MCF 10A (cell line): ENCODE measurements at regions of chr1 and their contacts with region 1.

Region 1: DNA sequence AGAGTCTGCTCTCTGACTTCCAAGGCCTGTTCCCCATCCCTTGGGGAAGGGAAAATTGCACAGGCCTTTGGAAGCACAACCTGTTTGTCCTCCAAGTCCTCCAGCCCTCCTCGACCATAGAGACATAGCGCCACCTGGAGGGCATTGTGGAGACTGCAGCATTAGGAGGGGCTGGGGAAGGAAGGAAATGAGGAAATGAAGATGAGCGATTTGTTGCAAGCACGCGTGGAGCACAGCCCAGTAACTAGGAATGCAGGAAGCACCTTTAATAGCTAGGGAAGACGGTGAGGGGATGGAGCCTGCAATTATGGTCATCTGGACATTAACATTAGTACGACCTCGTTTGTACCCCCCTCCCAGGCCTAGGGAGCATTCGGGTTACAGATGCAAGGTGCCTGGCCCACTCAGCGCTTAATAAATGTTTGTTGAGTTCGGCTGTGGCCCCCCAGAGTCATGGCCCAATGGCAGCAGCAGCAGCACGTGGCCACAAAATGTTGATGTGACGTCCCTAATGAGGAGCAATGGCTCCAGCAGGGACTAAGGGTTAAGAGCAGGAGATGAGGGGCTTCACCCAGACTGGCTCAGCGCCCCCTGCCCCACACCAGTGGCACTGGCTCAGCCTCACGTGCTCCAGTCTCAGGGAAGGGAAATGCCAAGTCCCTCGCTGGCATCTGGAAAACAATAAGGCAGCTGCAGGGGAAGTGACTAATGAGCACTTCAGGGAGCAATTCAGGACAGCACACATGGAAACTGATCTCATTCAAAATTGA is 8.0 kb upstream of the CAMK2N1 start:
- DNase-seq: peak; percentile 91
- H3K4me3 Mint-ChIP-seq: no peak overlapping the region
- H3K27ac Mint-ChIP-seq: no peak overlapping the region
- H3K4me1 Mint-ChIP-seq: peaks cover 29% of the 10 kb centered on the region
- H3K27me3 Mint-ChIP-seq: no peaks in the 10 kb centered on the region
- CTCF ChIP-seq: peak; percentile 94

Region 2: DNA sequence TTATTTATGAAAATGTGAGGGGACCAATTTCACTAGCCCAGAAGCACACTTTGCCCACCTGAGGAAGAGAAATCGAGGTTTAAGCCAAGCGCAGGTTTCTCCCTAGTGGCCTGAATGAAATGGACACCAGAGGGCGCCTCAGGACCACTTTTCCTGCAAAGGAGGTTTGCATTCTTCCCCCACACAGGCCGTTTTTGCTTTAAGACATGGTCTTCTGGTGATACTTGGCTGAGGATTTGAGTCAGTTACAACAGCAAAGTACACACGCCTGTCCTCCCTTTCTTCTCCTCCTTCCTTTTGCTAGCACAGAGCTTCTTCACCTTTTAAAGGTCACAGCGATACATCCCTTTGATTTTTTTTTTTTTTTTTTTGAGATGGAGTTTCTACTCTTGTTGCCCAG is 576.0 kb before region 1 on chr1:
- CTCF ChIA-PET with region 1: interaction called, 34 read pairs
- POLR2A ChIA-PET with region 1: interaction called, 4 read pairs
- intact Hi-C with region 1: loop called (anchors 1 kb)
- DNase-seq: peak; percentile 84
- H3K4me3 Mint-ChIP-seq: no peak overlapping the region
- H3K27ac Mint-ChIP-seq: no peak overlapping the region
- H3K4me1 Mint-ChIP-seq: peaks cover 11% of the 10 kb centered on the region
- H3K27me3 Mint-ChIP-seq: no peaks in the 10 kb centered on the region
- CTCF ChIP-seq: peak; percentile 90

Region 3: DNA sequence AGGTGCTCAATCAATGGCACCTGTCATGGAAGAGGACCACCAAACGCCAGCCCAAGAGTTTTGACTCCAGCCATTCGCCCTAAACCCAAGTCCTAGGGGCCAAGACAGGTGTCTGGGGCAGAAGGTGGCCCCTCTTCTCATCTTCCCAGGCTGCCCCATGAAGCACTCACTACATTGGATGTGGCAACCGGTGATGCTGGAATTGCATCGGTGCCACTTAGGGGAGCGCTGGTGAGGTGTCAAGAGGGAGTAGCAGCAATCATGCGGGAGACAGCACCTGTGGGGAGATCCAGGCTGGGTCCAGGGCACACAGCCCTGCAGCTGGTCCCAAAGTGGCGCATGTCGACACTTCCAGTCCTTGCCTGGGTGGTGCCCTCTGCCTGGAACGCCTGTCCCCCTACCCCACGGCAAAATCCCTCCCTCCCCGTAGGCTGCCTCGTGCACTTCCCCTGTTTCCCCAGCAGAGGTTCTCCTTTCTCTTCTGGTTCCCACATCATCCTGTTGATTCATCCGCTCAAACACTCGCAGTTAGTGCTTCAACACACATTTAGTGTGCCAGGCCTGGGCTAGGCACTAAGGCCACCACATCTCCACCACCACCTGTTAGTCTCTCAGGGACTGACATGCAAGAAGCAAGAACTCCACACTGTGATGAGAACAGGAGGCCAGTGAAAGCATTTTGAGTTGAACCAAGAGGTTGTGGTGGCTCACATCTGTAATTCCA is 393.2 kb before region 1 on chr1:
- CTCF ChIA-PET with region 1: interaction called, 7 read pairs
- POLR2A ChIA-PET with region 1: no interaction called
- intact Hi-C with region 1: loop called (anchors 2 kb)
- DNase-seq: peak; percentile 61
- H3K4me3 Mint-ChIP-seq: no peak overlapping the region
- H3K27ac Mint-ChIP-seq: no peak overlapping the region
- H3K4me1 Mint-ChIP-seq: peaks cover 12% of the 10 kb centered on the region
- H3K27me3 Mint-ChIP-seq: no peaks in the 10 kb centered on the region
- CTCF ChIP-seq: peak; percentile 92

Region 4: GRCh38 chr1:20178634-20179370 is 315.2 kb before region 1 on chr1:
- CTCF ChIA-PET with region 1: interaction called, 11 read pairs
- POLR2A ChIA-PET with region 1: no interaction called
- intact Hi-C with region 1: no loop called
- DNase-seq: no peak
- H3K4me3 Mint-ChIP-seq: no peak overlapping the region
- H3K27ac Mint-ChIP-seq: no peak overlapping the region
- H3K4me1 Mint-ChIP-seq: peaks cover 6% of the 10 kb centered on the region
- H3K27me3 Mint-ChIP-seq: no peaks in the 10 kb centered on the region
- CTCF ChIP-seq: no peak

Region 5: DNA sequence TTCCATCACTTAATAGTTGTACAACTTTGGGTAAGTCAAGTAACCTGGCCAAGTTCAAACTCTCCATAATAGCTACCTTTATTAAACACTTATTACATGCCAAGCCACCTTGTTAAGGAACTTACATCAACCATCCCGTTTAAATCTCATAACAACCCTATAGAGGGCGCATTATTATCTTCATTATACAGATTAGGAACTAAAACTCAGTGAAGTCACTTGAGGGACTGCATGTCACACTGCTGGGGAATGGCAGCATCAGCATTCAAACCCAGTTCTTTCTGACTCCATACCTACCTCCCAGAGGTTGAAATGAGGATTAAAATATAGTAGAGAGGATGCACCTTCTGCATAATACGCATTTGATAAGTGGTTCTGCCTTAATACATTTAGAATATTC is 260.6 kb before region 1 on chr1:
- CTCF ChIA-PET with region 1: interaction called, 3 read pairs
- POLR2A ChIA-PET with region 1: no interaction called
- intact Hi-C with region 1: loop called (anchors 5 kb)
- DNase-seq: peak; percentile 22
- H3K4me3 Mint-ChIP-seq: no peak overlapping the region
- H3K27ac Mint-ChIP-seq: no peak overlapping the region
- H3K4me1 Mint-ChIP-seq: no peaks in the 10 kb centered on the region
- H3K27me3 Mint-ChIP-seq: peaks cover 21% of the 10 kb centered on the region
- CTCF ChIP-seq: peak; percentile 20

Region 6: GRCh38 chr1:20376880-20377494 is 117.0 kb before region 1 on chr1:
- CTCF ChIA-PET with region 1: interaction called, 3 read pairs
- POLR2A ChIA-PET with region 1: no interaction called
- intact Hi-C with region 1: loop called (anchors 1 kb)
- DNase-seq: peak; percentile 48
- H3K4me3 Mint-ChIP-seq: no peak overlapping the region
- H3K27ac Mint-ChIP-seq: no peak overlapping the region
- H3K4me1 Mint-ChIP-seq: peaks cover 18% of the 10 kb centered on the region
- H3K27me3 Mint-ChIP-seq: no peaks in the 10 kb centered on the region
- CTCF ChIP-seq: peak; percentile 50

Region 7: DNA sequence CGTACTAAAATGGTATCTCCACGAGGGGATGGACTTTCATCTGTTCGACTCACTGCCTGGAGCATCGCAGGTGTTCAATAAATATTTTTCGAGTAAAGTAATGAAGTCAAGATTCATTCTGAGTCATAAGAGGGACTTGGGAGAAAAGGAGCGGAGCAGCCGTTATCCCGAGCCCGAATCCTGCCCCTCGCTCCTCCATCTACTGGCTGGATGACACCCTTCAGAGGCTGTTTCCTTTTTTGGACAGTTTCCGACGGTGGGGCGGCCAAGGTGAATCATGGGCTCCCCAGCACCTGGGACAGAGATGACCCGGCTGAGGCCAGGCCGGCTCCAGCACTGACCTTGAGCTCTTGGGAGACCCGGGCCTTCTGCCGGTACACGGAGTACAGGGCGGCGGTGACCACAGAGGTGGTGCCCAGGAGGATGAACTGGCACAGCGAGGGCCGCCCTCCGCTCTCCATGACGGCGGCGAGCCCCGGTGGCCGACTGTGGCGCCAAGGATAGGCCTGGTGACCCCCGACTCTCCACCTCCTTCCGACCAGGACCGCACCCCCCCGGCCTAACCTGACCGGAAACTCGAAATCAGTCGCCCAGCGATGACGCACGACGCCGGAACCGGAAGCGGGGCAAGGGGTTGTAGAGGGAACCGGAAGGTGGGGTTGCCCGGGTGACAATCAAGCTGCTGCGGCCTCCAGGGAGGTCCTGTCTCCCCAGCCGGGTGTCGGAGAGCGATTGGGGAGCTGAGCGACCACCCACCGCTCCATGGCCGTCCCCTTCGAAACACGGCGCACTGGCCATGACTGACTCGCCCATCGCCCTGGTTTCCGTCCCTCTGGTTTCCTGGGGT is 13.8 kb after region 1 on chr1 and contains the start of gene MUL1:
- CTCF ChIA-PET with region 1: interaction called, 10 read pairs
- POLR2A ChIA-PET with region 1: interaction called, 13 read pairs
- intact Hi-C with region 1: no loop called
- DNase-seq: peak; percentile 90
- H3K4me3 Mint-ChIP-seq: peak within 1 kb of the TSS; percentile 89
- H3K27ac Mint-ChIP-seq: peak within 1 kb of the TSS; percentile 98
- H3K4me1 Mint-ChIP-seq: peaks cover 11% of the 10 kb centered on the region
- H3K27me3 Mint-ChIP-seq: no peaks in the 10 kb centered on the region
- CTCF ChIP-seq: no peak
- total RNA-seq, gene MUL1: 23.4 and 29.9 TPM in 2 replicates